ENCODE measurements at regions of chr16 and their contacts with region 1.

Region 1: GRCh38 chr16:71412270-71413160 is 29.3 kb downstream of the TLE7 start:
- DNase-seq: peak; percentile 66
- ATAC-seq: peak; percentile 77
- H3K4me3 Mint-ChIP-seq: no peak overlapping the region
- H3K27ac Mint-ChIP-seq: no peak overlapping the region
- H3K4me1 Mint-ChIP-seq: peaks cover 11% of the 10 kb centered on the region
- H3K27me3 Mint-ChIP-seq: peaks cover 45% of the 10 kb centered on the region

Region 2: DNA sequence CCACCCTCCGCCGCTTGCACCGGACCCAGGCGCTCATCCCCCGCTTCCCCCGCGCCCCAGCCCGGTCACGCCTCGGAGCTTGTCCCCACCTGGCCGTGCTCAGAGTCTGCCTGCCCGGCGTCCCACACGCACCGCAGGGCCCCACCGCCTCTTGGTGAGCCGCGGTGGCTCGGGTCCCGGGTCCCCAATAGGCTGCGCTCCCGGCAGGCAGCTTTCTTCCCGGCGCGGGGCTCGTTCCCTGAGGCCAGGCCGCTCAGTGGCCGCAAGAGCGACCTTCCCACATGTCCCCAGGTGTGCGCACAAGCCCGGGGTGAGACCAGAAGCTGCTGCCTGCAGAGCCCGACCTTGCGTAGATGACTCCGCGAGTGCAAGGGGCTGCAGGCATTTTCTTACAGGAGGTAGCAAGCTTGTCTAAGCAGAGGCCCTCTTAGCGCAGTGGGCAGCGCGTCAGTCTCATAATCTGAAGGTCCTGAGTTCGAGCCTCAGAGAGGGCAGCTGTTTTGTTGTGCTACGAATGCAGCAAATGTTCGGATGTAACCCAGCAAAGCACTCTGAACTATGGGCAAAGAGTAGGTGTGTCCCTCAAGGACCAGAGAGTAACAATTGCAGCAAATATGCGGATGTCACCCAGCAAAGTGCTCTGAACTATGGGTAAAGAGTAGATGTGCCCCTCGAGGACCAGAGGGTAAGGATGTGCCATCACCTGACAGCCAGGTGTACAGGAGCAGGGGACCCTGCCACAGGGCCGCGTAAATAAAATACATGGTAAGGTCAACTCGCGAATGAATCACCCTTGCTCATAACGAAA is 13.8 kb after region 1 on chr16:
- CTCF ChIA-PET with region 1: interaction called, 21 read pairs
- DNase-seq: peak; percentile 69
- ATAC-seq: peak; percentile 79
- H3K4me3 Mint-ChIP-seq: peak overlapping the region; percentile 58
- H3K27ac Mint-ChIP-seq: peak overlapping the region; percentile 46
- H3K4me1 Mint-ChIP-seq: peaks cover 9% of the 10 kb centered on the region
- H3K27me3 Mint-ChIP-seq: peaks cover 39% of the 10 kb centered on the region

Region 3: GRCh38 chr16:71449020-71449419 is 36.5 kb after region 1 on chr16:
- CTCF ChIA-PET with region 1: no interaction called
- DNase-seq: no peak
- ATAC-seq: no peak
- H3K4me3 Mint-ChIP-seq: no peak overlapping the region
- H3K27ac Mint-ChIP-seq: no peak overlapping the region
- H3K4me1 Mint-ChIP-seq: no peaks in the 10 kb centered on the region
- H3K27me3 Mint-ChIP-seq: no peaks in the 10 kb centered on the region